Stomach (tissue), 19 donors: ENCODE measurements at regions of chr12 and their contacts with region 1.

Region 1: DNA sequence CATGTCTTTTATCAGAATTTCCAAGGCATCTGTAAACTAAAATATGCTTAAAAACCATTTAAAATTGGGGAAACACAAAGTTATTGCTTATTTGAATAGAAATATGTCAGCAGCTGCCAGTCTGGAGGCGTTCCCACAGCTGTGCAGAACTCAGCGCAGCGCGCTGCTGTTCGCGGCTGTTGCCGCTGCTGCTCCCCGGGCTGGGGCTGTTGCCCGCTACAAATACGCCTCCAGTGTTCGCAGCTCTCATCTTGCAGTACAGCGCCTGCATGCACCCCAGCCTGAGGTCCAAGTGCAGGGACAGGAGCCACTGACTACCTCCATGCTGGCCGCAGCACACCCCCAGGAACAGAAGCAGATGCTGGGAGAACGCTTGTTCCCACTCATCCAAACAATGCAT is 216.2 kb downstream of the SLC16A7 start:
- DNase-seq: no peak
- H3K4me3 ChIP-seq: no peak overlapping the region
- H3K27ac ChIP-seq: no peak overlapping the region
- H3K4me1 ChIP-seq: no peaks in the 10 kb centered on the region
- H3K27me3 ChIP-seq: no peaks in the 10 kb centered on the region
- CTCF ChIP-seq: no peak
- EP300 ChIP-seq: no peak
- POLR2A ChIP-seq: no peak

Region 2: DNA sequence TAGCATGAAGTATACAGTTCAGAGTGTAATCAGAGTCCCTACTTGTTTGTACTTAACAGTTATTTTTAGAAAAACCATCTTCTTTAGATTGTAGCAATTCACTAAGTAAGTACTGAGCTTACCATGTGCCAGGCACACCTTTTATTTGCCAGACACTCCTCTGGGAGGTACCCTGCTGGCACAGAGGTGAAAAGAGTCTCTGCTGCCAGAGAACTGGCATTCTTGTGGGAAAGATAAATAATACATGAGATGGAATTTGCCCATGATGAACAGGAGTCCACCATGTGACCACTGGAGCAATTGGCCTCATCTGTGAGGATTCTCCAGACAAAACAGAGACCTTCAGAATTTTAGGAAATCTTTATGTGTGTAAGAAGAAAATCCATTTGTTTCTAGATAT is 415.5 kb before region 1 on chr12:
- intact Hi-C with region 1: loop called (anchors 10 kb)
- DNase-seq: peak in 1 of 2 donors; percentile 25
- H3K4me3 ChIP-seq: no peak overlapping the region
- H3K27ac ChIP-seq: no peak overlapping the region
- H3K4me1 ChIP-seq: no peaks in the 10 kb centered on the region
- H3K27me3 ChIP-seq: no peaks in the 10 kb centered on the region
- CTCF ChIP-seq: no peak
- EP300 ChIP-seq: no peak
- POLR2A ChIP-seq: no peak